Endothelial cell of umbilical vein (primary cell): ENCODE measurements at regions of chr7 and their contacts with region 1.

Region 1: GRCh38 chr7:4610768-4611467 is 71.2 kb upstream of the FOXK1 start:
- DNase-seq: peak; percentile 71
- H3K4me3 ChIP-seq: no peak overlapping the region
- H3K27ac ChIP-seq: no peak overlapping the region
- H3K4me1 ChIP-seq: peaks cover 12% of the 10 kb centered on the region
- H3K27me3 ChIP-seq: no peaks in the 10 kb centered on the region
- CTCF ChIP-seq: peak; percentile 65 to 68
- POLR2A ChIP-seq: no peak

Region 2: GRCh38 chr7:4575254-4575653 is 35.7 kb before region 1 on chr7:
- CTCF ChIA-PET with region 1: no interaction called
- POLR2A ChIA-PET with region 1: no interaction called
- dilution Hi-C with region 1: no loop called
- intact Hi-C with region 1: no loop called
- DNase-seq: no peak
- H3K4me3 ChIP-seq: no peak overlapping the region
- H3K27ac ChIP-seq: no peak overlapping the region
- H3K4me1 ChIP-seq: no peaks in the 10 kb centered on the region
- H3K27me3 ChIP-seq: no peaks in the 10 kb centered on the region
- CTCF ChIP-seq: no peak
- POLR2A ChIP-seq: no peak

Region 3: GRCh38 chr7:4631664-4632171 is 20.8 kb after region 1 on chr7:
- CTCF ChIA-PET with region 1: interaction called, 45 read pairs
- POLR2A ChIA-PET with region 1: no interaction called
- dilution Hi-C with region 1: no loop called
- intact Hi-C with region 1: loop called (anchors 1 kb)
- DNase-seq: peak; percentile 76
- H3K4me3 ChIP-seq: no peak overlapping the region
- H3K27ac ChIP-seq: no peak overlapping the region
- H3K4me1 ChIP-seq: peaks cover 3% of the 10 kb centered on the region
- H3K27me3 ChIP-seq: no peaks in the 10 kb centered on the region
- CTCF ChIP-seq: peak; percentile 65 to 66
- POLR2A ChIP-seq: no peak

Region 4: GRCh38 chr7:4753711-4754432 is 143.0 kb after region 1 on chr7:
- CTCF ChIA-PET with region 1: no interaction called
- POLR2A ChIA-PET with region 1: no interaction called
- dilution Hi-C with region 1: no loop called
- intact Hi-C with region 1: loop called (anchors 1 kb)
- DNase-seq: peak; percentile 48
- H3K4me3 ChIP-seq: no peak overlapping the region
- H3K27ac ChIP-seq: no peak overlapping the region
- H3K4me1 ChIP-seq: peaks cover 4% of the 10 kb centered on the region
- H3K27me3 ChIP-seq: no peaks in the 10 kb centered on the region
- CTCF ChIP-seq: peak; percentile 87 to 93
- POLR2A ChIP-seq: no peak

Region 5: DNA sequence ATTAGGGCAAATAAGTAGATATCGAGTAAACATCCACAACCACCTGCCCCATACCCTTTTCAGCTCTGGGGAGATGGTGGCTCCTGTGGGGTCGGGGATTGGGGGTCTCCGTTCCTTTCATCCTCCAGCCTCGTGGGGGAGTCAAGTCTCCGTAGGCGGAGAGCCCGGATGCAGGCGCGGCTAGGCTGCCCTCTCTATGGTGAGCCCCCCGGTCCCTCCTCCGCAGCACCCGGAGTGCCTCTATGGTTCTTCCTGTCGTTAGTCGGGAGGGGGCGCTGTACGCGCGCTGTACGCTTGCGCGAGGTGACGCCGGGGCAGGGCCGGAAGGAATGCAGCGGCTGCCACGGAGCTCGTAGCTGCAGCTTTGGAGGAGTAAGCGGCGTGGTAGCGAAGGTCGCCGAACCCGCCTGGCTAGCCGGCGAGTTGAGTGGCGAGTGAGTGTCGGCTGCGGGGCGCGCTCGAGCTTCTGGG is 362.8 kb after region 1 on chr7:
- CTCF ChIA-PET with region 1: no interaction called
- POLR2A ChIA-PET with region 1: no interaction called
- dilution Hi-C with region 1: no loop called
- intact Hi-C with region 1: loop called (anchors 10 kb)
- DNase-seq: peak; percentile 90
- H3K4me3 ChIP-seq: peak overlapping the region; percentile 47 to 58 (median 57)
- H3K27ac ChIP-seq: no peak overlapping the region
- H3K4me1 ChIP-seq: peaks cover 7% of the 10 kb centered on the region
- H3K27me3 ChIP-seq: no peaks in the 10 kb centered on the region
- CTCF ChIP-seq: peak; percentile 87 to 93
- POLR2A ChIP-seq: peak; percentile 73